GM10248 (cell line): ENCODE measurements at regions of chr16 and their contacts with region 1.

Region 1: GRCh38 chr16:84881702-84882521 is 62.1 kb downstream of the CRISPLD2 start:
- DNase-seq: no peak
- CTCF ChIP-seq: no peak

Region 2: GRCh38 chr16:84478172-84478947 is 403.6 kb before region 1 on chr16:
- CTCF ChIA-PET with region 1: no interaction called
- POLR2A ChIA-PET with region 1: interaction called, 10 read pairs
- DNase-seq: no peak
- CTCF ChIP-seq: no peak

Region 3: DNA sequence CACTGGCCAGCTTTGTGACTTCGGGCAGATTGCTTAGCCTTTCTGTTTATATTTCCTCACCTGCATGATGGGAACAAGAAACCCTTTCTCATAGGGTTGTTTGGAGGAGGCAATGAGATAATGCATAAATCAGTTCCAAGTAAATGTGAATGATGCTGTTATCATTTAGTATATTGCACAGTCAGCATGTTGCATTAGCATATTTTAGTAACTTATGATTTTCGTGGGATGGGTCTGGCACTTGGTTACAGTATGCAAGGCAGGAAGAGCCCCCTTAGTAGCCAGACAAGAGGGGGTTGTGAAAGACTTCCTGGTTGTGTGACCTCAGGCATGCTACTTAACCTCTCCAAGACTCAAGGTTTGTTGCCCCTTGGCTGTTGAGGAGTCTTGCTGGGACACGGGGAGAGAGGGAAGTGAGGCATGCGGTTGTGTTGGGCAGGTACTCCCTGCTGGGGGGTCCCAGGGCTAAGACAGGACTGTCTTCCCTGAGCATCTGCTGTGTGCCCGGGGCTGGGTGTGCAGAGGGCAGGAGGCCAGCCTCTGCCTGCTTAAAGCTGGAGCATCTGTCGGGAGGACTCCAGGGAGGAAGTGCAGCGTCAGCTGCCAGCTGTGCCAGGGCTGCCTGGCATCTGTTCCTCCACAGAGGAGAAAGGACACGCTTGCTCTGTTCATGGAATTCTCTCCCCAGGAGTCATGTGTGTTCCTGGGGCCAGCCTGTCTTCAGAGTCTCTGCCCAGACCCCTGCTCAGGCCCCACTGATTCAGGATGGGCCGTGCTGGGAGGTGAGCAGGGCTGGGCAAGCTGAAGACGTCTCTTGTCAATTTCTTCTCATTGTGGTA is 38.2 kb before region 1 on chr16:
- CTCF ChIA-PET with region 1: no interaction called
- POLR2A ChIA-PET with region 1: no interaction called
- DNase-seq: no peak
- CTCF ChIP-seq: no peak

Region 4: GRCh38 chr16:84959045-84959576 is 77.2 kb after region 1 on chr16:
- CTCF ChIA-PET with region 1: no interaction called
- POLR2A ChIA-PET with region 1: no interaction called
- DNase-seq: no peak
- CTCF ChIP-seq: no peak